ENCODE measurements at regions of chr6 and their contacts with region 1.

Region 1: DNA sequence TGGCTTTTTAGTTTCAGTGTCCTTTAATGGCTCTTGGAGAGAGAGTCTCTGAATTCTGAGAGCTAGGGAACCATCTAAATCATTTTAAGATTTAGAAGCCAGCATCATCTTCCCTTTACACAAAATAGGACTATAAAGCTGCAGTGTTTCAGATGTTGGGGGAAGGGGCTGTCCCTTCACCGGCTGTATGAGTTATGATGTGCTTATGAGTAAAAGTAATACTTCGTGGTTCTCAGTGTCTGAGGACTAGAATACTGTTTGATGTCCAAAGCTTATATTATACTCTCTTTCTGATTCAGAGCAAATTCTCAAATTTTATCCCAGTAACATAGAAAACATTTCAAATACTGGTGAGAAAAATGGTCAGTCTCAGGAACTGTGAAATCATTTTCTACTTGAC is 63.5 kb upstream of the FAM8A1 start:
- DNase-seq: no peak
- ATAC-seq: no peak
- H3K4me3 ChIP-seq: no peak overlapping the region
- H3K27ac ChIP-seq: no peak overlapping the region
- H3K4me1 ChIP-seq: no peaks in the 10 kb centered on the region
- H3K27me3 ChIP-seq: no peaks in the 10 kb centered on the region
- CTCF ChIP-seq: no peak

Region 2: GRCh38 chr6:17365977-17366376 is 170.6 kb before region 1 on chr6:
- CTCF ChIA-PET with region 1: no interaction called
- POLR2A ChIA-PET with region 1: interaction called, 13 read pairs
- in situ Hi-C with region 1: no loop called
- intact Hi-C with region 1: no loop called
- DNase-seq: no peak
- ATAC-seq: no peak; the same call in 1 of the 2 replicates
- H3K4me3 ChIP-seq: no peak overlapping the region
- H3K27ac ChIP-seq: no peak overlapping the region
- H3K4me1 ChIP-seq: no peaks in the 10 kb centered on the region
- H3K27me3 ChIP-seq: no peaks in the 10 kb centered on the region
- CTCF ChIP-seq: no peak

Region 3: DNA sequence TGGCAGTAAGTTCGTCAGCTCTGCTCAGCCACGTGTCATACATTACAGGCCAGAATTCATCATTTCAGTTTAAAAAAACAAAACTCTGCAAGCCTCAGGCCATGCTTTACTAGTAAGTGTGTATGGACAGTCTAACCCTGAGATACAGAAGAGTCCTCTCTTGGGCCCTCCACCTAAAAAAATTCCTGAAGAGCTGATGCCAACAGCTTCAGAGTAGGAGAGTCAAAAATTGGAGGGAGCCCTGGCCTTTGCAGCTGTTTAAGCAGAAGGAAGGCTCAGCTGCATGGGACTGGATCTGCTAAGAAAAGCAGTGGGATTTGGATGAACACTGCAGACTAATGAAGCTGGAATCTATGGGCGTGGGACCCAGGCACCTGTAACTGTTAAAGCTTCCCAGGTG is 16.3 kb after region 1 on chr6:
- CTCF ChIA-PET with region 1: no interaction called
- POLR2A ChIA-PET with region 1: interaction called, 18 read pairs
- in situ Hi-C with region 1: no loop called
- intact Hi-C with region 1: no loop called
- DNase-seq: no peak
- ATAC-seq: no peak
- H3K4me3 ChIP-seq: no peak overlapping the region
- H3K27ac ChIP-seq: no peak overlapping the region
- H3K4me1 ChIP-seq: no peaks in the 10 kb centered on the region
- H3K27me3 ChIP-seq: no peaks in the 10 kb centered on the region
- CTCF ChIP-seq: no peak